Naive thymus-derived CD4-positive, alpha-beta T cell (primary cell): ENCODE measurements at regions of chr4 and their contacts with region 1.

Region 1: GRCh38 chr4:40550948-40551462 is 78.7 kb downstream of the RBM47 start:
- DNase-seq: peak in 8 of 9 donors; percentile 25 to 77 (median 62)
- ATAC-seq: peak; percentile 68
- H3K4me3 ChIP-seq: peak overlapping the region; percentile 47
- H3K4me3 Mint-ChIP-seq: peak overlapping the region; percentile 74 to 95 (median 85)
- H3K27ac ChIP-seq: peak overlapping the region; percentile 61
- H3K27ac Mint-ChIP-seq: peak overlapping the region; percentile 83 to 99 (median 92)
- H3K4me1 ChIP-seq: peaks cover 0 to 11% of the 10 kb centered on the region in 2 donors
- H3K4me1 Mint-ChIP-seq: peaks cover 9 to 44% (median 19%) of the 10 kb centered on the region in 7 donors
- H3K27me3 ChIP-seq: no peaks in the 10 kb centered on the region
- H3K27me3 Mint-ChIP-seq: no peaks in the 10 kb centered on the region

Region 2: DNA sequence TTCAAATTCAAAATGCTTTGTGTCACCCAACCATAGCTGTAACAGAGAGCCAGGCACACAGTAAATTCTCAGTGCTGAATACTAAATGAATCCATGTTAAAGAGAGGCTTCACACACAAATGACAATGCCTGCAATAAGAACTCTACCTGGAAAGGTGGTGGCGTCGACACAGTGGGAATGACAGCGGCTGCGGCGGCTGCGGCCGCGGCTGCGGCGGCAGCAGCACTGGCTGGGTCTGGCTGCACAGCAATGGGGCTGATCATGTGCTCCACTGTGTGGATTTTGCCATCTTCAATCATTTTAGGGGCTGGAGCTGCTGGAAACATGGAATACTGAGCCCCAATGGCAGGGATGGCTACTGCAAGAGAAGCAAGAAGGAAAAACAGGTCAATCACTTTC is 118.5 kb before region 1 on chr4:
- CTCF ChIA-PET with region 1: no interaction called
- POLR2A ChIA-PET with region 1: no interaction called
- intact Hi-C with region 1: loop called (anchors 1 to 2 kb)
- DNase-seq: no peak
- ATAC-seq: no peak
- H3K4me3 ChIP-seq: no peak overlapping the region
- H3K4me3 Mint-ChIP-seq: peak overlapping the region in 6 of 10 donors; percentile 11 to 62 (median 51)
- H3K27ac ChIP-seq: peak overlapping the region; percentile 61
- H3K27ac Mint-ChIP-seq: peak overlapping the region; percentile 83 to 99 (median 89)
- H3K4me1 ChIP-seq: peaks cover 0 to 29% of the 10 kb centered on the region in 2 donors
- H3K4me1 Mint-ChIP-seq: peaks cover 11 to 60% (median 42%) of the 10 kb centered on the region in 7 donors
- H3K27me3 ChIP-seq: no peaks in the 10 kb centered on the region
- H3K27me3 Mint-ChIP-seq: no peaks in the 10 kb centered on the region

Region 3: GRCh38 chr4:40438384-40439026 is 112.5 kb before region 1 on chr4:
- CTCF ChIA-PET with region 1: no interaction called
- POLR2A ChIA-PET with region 1: no interaction called
- intact Hi-C with region 1: loop called (anchors 1 to 2 kb)
- DNase-seq: no peak
- ATAC-seq: no peak
- H3K4me3 ChIP-seq: no peak overlapping the region
- H3K4me3 Mint-ChIP-seq: peak overlapping the region in 9 of 10 donors; percentile 0 to 67 (median 47)
- H3K27ac ChIP-seq: peak overlapping the region; percentile 25
- H3K27ac Mint-ChIP-seq: peak overlapping the region in 6 of 9 donors; percentile 17 to 88 (median 74)
- H3K4me1 ChIP-seq: peaks cover 0 to 20% of the 10 kb centered on the region in 2 donors
- H3K4me1 Mint-ChIP-seq: peaks cover 3 to 62% (median 45%) of the 10 kb centered on the region in 7 donors
- H3K27me3 ChIP-seq: no peaks in the 10 kb centered on the region
- H3K27me3 Mint-ChIP-seq: peaks cover 0 to 3% (median 0%) of the 10 kb centered on the region in 5 donors

Region 4: DNA sequence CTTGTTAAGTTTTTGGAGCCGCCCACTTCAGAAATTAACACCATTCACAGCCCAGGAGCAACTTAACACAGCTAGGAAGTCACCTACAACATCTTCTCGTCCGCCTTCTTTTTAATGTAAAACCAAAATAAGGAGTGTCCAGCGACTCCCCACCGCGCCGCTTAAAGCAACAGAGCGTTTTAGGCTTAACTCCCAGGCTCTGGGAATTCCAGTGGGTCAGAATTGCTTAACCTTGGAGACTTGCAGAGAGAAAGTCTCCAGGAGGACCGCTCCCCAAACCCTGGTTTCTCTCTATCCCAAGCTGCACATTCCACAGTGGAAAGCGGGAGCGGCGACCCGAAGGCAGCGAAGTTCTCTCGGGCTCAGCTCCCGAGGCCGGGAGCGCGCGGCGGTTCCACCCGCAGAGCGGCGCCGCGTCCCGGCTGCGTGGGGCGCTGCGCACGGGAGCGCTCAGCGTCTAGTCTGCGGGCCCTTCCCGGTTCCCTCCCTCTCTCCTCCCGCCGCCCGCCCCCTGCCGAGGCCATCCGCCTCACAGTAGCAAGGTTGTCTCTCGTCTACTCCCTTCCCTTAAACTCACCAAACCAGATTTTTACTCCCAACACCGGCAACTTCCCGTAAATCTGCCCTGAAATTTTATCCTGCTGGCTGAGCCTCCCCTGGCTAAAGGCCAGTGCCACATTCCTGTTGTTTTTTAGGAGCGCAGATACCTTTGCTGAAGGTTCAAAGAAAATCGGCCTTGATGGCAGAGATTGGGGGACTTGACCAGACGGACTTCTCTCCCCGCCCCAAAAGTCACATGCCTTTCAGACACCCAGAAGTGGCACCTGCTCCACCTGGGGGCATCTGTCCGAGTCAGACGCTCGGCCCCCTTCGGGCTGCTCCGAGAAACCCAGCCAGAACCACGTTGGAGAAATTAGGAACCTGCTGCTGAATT is 78.7 kb after region 1 on chr4 and contains the start of gene RBM47:
- CTCF ChIA-PET with region 1: no interaction called
- POLR2A ChIA-PET with region 1: no interaction called
- intact Hi-C with region 1: loop called in 1 of 2 experiments (anchors 5 kb)
- DNase-seq: peak; percentile 4 to 43 (median 28)
- ATAC-seq: peak; percentile 81
- H3K4me3 ChIP-seq: peak within 1 kb of the TSS; percentile 76
- H3K4me3 Mint-ChIP-seq: peak within 1 kb of the TSS; percentile 77 to 97 (median 90)
- H3K27ac ChIP-seq: peak within 1 kb of the TSS; percentile 17
- H3K27ac Mint-ChIP-seq: peak within 1 kb of the TSS in 8 of 9 donors; percentile 62 to 89 (median 80)
- H3K4me1 ChIP-seq: peaks cover 0 to 13% of the 10 kb centered on the region in 2 donors
- H3K4me1 Mint-ChIP-seq: peaks cover 18 to 36% (median 22%) of the 10 kb centered on the region in 7 donors
- H3K27me3 ChIP-seq: no peaks in the 10 kb centered on the region
- H3K27me3 Mint-ChIP-seq: peaks cover 0 to 28% (median 21%) of the 10 kb centered on the region in 5 donors
- total RNA-seq, gene RBM47: 1.8 to 47.2 (median 2.6) TPM

Region 5: DNA sequence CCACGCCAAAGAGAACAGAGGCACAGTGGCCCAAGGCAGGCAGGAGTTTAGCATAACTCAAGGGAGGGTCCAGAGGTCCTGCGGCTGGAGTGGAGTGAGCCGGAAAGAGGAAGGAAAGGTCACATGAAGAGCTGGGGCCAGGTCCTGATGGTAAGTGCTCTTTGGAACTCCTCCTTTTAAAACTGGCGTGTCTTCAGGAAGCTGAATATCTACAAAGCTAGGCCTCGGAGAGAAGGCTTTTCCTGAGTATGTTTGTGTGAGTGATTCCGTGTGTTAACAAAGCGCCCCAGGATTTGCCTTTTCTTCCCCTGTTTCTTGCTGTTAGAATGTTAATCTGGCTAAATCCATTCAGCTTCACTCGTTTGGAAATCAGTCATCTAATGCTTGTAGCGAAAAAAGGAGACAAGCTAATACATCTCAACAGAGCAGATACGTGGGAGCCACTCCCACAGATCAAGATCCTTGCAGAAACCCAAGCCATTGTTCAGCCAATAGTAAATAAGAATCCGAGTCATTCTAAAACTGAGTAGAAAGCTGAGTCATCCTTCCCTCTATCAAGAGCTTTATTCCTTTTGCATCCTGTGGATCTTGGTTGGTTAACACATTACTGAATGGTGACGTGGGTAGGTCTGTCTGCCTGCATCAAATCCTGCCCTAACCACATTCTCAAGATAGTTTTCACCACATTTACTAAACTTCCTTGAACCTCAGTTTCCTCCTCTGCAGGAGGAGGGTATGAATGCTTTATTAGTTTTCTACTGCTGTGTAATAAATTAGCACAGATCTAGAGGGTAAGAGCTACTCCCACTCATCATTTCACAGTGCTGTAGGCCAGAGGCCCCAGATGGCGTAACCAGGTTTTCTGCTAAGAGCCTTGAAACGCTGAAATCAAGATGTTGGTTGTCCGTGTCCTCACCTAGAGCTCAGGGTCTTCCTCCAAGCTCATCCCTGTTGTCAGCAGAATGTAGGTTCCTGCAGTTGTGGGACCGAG is 121.8 kb after region 1 on chr4:
- CTCF ChIA-PET with region 1: no interaction called
- POLR2A ChIA-PET with region 1: no interaction called
- intact Hi-C with region 1: loop called in 1 of 2 experiments (anchors 5 kb)
- DNase-seq: peak in 6 of 9 donors; percentile 4 to 49 (median 29)
- ATAC-seq: peak; percentile 88
- H3K4me3 ChIP-seq: no peak overlapping the region
- H3K4me3 Mint-ChIP-seq: peak overlapping the region in 3 of 10 donors; percentile 15 to 80 (median 31)
- H3K27ac ChIP-seq: no peak overlapping the region
- H3K27ac Mint-ChIP-seq: peak overlapping the region in 5 of 9 donors; percentile 42 to 94 (median 65)
- H3K4me1 ChIP-seq: peaks cover 4 to 16% of the 10 kb centered on the region in 2 donors
- H3K4me1 Mint-ChIP-seq: peaks cover 12 to 50% (median 14%) of the 10 kb centered on the region in 7 donors
- H3K27me3 ChIP-seq: no peaks in the 10 kb centered on the region
- H3K27me3 Mint-ChIP-seq: no peaks in the 10 kb centered on the region

Region 6: GRCh38 chr4:40719008-40719623 is 168.1 kb after region 1 on chr4:
- CTCF ChIA-PET with region 1: no interaction called
- POLR2A ChIA-PET with region 1: no interaction called
- intact Hi-C with region 1: loop called in 1 of 2 experiments (anchors 1 kb)
- DNase-seq: peak in 1 of 9 donors; percentile 39
- ATAC-seq: no peak
- H3K4me3 ChIP-seq: no peak overlapping the region
- H3K4me3 Mint-ChIP-seq: no peak overlapping the region
- H3K27ac ChIP-seq: no peak overlapping the region
- H3K27ac Mint-ChIP-seq: peak overlapping the region in 1 of 9 donors; percentile 36
- H3K4me1 ChIP-seq: peaks cover 0 to 13% of the 10 kb centered on the region in 2 donors
- H3K4me1 Mint-ChIP-seq: peaks cover 0 to 33% (median 0%) of the 10 kb centered on the region in 7 donors
- H3K27me3 ChIP-seq: no peaks in the 10 kb centered on the region
- H3K27me3 Mint-ChIP-seq: no peaks in the 10 kb centered on the region